ENCODE measurements at regions of chr19 and their contacts with region 1.

Region 1: GRCh38 chr19:5904352-5905113 is at the start of gene VMAC:
- DNase-seq: peak; percentile 99
- CTCF ChIP-seq: no peak

Region 2: DNA sequence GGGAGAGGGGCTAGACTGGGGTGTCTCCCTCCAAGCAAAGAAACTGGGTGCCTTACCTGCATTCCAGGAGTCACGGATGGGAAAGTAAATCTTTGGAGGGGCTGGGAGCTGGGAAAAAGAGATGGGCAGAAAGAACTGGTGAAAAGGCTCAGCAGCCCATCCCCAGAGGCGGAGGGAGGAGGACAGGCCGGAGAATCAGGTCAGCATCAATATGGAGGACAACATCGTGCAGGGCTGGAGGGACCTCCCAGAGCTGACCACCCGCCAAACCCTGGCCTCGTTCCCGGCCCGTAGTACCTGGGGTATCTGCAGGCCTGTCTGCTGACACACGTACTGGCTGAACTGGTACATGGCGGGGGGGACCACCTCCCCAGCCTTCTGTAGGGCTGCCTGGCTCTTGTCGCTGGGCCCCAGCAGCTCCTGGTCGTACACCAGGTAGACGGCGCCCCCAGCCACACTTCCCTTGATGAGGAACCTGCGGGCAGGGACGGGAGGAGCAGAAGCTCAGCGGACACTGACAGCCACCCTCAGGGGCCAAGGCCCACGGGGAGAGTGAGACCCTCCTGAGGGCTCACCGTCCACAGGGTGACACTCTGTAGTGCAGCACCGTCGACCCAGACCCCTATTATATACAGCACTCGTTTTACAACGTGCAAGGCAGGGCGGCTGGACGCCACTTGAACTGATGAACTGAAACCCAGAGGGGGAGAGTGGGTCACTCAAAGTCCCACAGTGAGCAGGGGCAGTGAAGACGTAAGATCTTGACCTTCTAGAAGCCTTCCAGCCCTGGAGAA is 225.0 kb before region 1 on chr19:
- CTCF ChIA-PET with region 1: no interaction called
- POLR2A ChIA-PET with region 1: no interaction called
- DNase-seq: peak; percentile 20
- CTCF ChIP-seq: no peak

Region 3: DNA sequence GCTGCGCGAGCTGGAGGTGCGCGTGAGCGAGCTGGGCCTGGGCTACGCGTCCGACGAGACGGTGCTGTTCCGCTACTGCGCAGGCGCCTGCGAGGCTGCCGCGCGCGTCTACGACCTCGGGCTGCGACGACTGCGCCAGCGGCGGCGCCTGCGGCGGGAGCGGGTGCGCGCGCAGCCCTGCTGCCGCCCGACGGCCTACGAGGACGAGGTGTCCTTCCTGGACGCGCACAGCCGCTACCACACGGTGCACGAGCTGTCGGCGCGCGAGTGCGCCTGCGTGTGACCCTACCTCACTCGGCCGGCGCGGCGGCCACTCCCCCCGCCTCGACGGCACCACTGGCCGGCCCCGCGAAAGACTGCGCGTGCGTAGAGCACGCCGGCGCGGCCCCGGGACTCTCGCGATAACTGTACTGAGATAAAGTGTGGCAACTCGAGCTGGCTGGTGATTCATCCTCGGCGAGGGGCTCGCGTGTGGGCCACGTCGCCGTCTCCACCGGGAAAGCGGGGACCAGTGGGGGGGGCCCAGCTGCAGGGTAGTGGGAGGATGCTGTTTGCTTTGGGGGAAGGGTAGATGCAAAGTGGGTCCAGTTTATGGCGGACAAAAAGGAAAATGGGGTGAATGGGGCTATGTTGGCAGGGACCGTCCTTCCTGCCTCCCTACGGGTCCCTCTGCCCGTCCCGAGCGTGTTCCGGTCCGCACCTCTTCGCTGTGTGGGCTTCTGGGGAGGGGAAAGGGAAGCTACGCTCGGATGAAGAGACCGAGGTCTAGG is 76.5 kb before region 1 on chr19:
- CTCF ChIA-PET with region 1: interaction called, 3 read pairs
- POLR2A ChIA-PET with region 1: interaction called, 21 read pairs
- DNase-seq: peak; percentile 98
- CTCF ChIP-seq: no peak

Region 4: GRCh38 chr19:5891938-5892771 is 12.4 kb before region 1 on chr19:
- CTCF ChIA-PET with region 1: interaction called, 10 read pairs
- POLR2A ChIA-PET with region 1: interaction called, 4 read pairs
- DNase-seq: no peak
- CTCF ChIP-seq: peak; percentile 53

Measured in GM10248 (cell line).